BJ (cell line): ENCODE measurements at regions of chr2 and their contacts with region 1.

Region 1: GRCh38 chr2:100063459-100063953 is 78.9 kb downstream of the AFF3 start:
- DNase-seq: no peak
- H3K4me3 ChIP-seq: no peak overlapping the region
- H3K27me3 ChIP-seq: no peaks in the 10 kb centered on the region
- CTCF ChIP-seq: no peak

Region 2: GRCh38 chr2:99911736-99912135 is 151.8 kb before region 1 on chr2:
- CTCF ChIA-PET with region 1: no interaction called
- POLR2A ChIA-PET with region 1: interaction called, 12 read pairs
- DNase-seq: no peak
- H3K4me3 ChIP-seq: no peak overlapping the region
- H3K27me3 ChIP-seq: no peaks in the 10 kb centered on the region
- CTCF ChIP-seq: no peak